ENCODE measurements at regions of chr16 and their contacts with region 1.

Region 1: DNA sequence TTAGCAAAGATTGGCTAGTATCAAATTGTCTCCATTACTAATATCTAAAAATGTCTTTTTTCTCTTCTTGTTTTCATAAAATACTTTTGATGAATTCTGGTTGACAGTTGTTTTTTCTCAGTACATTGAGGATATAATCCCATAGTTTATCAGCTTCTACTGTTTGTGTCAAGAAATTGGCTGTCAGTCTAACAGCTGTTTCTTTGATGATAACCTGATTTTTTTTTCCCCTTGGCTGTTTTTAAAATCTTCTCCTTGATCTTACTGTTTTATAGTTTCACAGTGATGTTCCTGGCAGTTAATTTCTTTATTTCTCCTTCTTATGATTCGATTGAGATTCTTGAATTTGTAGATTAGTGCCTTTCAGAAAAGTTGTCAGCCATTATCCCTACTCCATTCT is 315.3 kb upstream of the PMFBP1 start:
- DNase-seq: no peak
- ATAC-seq: no peak
- H3K4me3 ChIP-seq: no peak overlapping the region
- H3K27ac ChIP-seq: no peak overlapping the region
- H3K4me1 ChIP-seq: no peaks in the 10 kb centered on the region
- H3K27me3 ChIP-seq: no peaks in the 10 kb centered on the region

Region 2: DNA sequence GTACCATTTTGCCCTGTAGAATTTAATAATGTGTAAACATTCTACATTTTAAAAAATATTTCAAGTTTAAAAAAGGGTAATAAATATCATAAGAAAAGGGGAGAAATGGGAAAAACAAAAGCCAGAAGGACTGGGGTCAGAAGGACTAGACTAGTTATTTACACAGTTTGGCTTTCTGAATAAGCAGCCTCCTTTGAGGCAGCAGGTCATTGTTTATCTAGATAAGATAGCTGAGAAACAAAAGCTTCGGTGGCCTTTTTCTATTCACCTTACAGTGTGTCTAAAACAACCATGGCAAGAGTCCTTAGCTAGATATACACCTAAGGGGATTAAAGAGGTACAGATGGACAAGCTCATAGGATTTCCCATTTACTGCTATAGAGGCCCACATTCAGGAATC is 81.2 kb after region 1 on chr16:
- intact Hi-C with region 1: no loop called
- DNase-seq: no peak
- ATAC-seq: no peak
- H3K4me3 ChIP-seq: no peak overlapping the region
- H3K27ac ChIP-seq: no peak overlapping the region
- H3K4me1 ChIP-seq: no peaks in the 10 kb centered on the region
- H3K27me3 ChIP-seq: no peaks in the 10 kb centered on the region

Region 3: DNA sequence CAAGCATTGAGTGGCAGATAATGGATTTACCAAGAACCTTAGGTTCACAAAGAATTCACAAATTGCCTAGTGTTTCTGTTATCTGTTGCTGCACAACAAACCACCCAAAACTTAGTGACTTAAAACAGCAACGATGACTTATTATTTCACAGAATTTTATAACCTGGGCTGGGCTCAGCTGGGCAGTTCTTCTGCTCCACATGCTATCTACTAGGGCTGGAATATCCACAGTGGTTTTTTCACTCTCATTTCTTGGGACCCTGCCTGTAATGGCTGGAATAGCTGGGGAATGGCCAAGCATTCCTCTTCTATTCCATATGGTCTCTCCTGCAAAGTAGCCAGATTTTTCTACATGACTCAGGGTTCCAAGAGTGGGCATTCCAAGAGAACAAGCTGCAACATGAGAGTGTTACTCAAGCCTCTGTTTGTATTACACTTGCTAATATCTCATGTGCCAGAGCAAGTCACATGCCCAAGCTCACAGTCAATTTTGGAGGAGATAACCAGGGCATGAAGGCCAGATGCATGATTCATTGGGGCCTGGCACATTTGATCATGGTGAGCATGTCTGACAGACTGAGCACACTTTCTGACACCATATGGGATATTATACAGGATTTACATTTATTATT is 1804.4 kb after region 1 on chr16:
- intact Hi-C with region 1: loop called in 1 of 2 experiments (anchors 5 kb)
- DNase-seq: no peak
- ATAC-seq: no peak
- H3K4me3 ChIP-seq: no peak overlapping the region
- H3K27ac ChIP-seq: no peak overlapping the region
- H3K4me1 ChIP-seq: no peaks in the 10 kb centered on the region
- H3K27me3 ChIP-seq: no peaks in the 10 kb centered on the region